ENCODE measurements at regions of chr4 and their contacts with region 1.

Region 1: DNA sequence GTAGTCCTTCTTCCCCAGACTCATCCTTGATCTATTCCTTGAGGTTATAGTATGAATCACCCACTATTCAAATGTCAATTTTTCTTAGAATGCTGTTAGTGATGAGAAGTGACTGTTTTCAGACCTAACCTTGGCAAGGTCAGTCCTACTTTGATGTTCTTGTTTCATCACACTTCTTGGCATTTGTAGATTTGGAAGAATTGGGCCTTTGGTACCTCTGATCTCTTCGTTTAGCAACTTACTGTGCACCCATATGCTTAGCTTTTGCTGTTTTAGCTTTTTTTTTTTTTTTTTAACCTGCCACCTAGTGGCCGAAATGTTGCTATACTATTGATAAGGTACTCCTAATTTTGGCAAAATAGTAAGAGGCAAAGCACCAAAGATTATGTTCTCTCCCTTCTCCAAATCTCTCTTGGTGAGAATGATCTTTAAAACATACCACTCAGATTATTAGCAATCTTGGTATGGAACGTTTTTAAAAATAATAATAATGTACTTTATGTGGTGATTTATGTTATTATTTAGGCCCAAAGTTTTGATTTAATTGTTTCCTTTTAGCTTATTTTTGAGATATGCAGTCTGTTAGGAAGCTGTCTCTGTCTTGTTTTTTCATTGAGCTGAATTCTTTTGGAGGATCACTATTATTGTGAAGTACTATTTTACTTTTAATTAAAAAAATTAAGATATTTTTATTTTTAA is 16.6 kb downstream of the DCK start:
- DNase-seq: no peak
- H3K4me3 ChIP-seq: no peak overlapping the region
- H3K27ac ChIP-seq: no peak overlapping the region
- H3K4me1 ChIP-seq: no peaks in the 10 kb centered on the region
- H3K27me3 ChIP-seq: no peaks in the 10 kb centered on the region
- CTCF ChIP-seq: peak; percentile 54

Region 2: DNA sequence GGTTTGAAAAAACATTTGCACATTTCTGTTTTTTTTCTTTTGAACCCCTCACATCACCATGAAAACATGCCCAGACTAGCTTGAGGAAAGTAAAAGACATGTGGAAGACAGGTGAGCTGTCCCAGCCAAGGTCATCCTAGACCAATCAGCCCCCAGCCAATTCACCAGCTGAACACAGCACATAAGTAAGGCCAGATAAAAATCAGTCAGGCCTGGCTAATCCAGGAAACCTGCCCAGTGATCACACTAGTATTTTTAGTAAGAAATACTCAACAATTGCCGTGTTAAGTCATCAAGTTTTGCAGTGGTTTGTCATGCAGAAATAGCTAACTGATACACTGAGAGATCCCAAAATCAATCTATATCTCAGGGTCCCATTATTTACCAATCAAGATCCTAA is 653.9 kb before region 1 on chr4:
- intact Hi-C with region 1: no loop called
- DNase-seq: no peak
- H3K4me3 ChIP-seq: no peak overlapping the region
- H3K27ac ChIP-seq: no peak overlapping the region
- H3K4me1 ChIP-seq: no peaks in the 10 kb centered on the region
- H3K27me3 ChIP-seq: no peaks in the 10 kb centered on the region
- CTCF ChIP-seq: no peak

Region 3: DNA sequence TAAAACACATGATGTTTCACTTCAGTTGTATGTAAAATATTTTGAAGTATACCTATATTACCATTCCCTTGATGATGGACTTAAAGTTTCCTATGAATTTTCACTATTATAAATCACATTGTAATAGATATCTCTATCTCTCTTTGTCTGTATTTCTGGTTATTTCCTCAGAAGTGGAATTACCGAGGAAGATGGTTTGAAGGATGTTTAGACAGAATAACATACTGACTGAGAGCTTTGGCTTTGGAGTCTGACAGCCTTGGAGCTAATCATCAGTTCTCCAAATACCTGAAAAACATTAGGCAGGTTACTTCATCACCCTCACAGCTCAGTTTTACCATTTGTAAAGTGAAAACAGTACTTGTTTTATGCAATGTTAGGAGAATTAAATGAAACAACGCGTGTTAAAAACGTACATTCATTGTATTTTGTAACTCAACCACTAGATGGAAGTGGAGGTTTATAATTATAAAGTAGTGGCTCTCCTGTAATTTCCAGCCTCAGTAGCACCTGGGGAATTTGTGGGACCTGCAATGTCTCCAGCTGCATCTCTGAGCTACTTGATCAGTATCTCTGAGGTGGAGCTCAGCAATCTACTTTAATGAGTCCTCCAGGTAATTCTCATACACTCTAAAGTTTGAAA is 358.1 kb before region 1 on chr4:
- intact Hi-C with region 1: loop called (anchors 5 kb)
- DNase-seq: no peak
- H3K4me3 ChIP-seq: no peak overlapping the region
- H3K27ac ChIP-seq: no peak overlapping the region
- H3K4me1 ChIP-seq: no peaks in the 10 kb centered on the region
- H3K27me3 ChIP-seq: no peaks in the 10 kb centered on the region
- CTCF ChIP-seq: peak; percentile 49